Cardiac septum (tissue), 1 donor: ENCODE measurements at regions of chr1 and their contacts with region 1.

Region 1: GRCh38 chr1:159924981-159925712 is at the start of gene TAGLN2:
- DNase-seq: peak; percentile 96
- total RNA-seq, gene TAGLN2: 103 TPM

Region 2: GRCh38 chr1:158149577-158150269 is 1775.4 kb before region 1 on chr1:
- intact Hi-C with region 1: loop called (anchors 5 kb)
- DNase-seq: peak; percentile 97

Region 3: DNA sequence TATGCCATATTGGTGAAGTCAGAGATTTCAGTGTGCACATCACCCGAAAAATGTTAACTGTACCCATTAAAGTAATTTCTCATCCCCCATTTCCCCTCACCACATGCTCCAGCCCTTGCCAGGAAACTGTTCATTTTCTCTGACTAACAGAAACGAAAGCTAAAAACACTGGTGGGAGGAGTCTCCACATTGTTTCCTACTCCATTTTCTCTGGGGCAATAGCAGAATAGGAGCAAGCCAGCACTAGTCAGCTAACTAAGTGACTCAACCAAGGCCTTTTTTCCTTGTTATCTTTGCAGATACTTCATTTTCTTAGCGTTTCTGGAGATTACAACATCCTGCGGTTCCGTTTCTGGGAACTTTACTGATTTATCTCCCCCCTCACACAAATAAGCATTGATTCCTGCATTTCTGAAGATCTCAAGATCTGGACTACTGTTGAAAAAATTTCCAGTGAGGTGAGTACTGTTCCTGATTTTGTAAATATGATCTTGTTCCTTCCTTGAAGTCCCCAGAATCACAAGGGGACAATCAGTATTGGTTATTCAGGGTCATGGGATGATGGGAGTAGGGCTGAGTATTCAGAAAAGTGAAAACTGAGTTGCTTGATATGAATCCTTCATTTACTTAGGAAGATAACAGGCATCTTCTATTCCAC is 915.3 kb before region 1 on chr1 and contains the start of gene IFI16:
- intact Hi-C with region 1: loop called (anchors 5 kb)
- DNase-seq: no peak
- total RNA-seq, gene IFI16: 31.1 TPM

Region 4: GRCh38 chr1:159854693-159855192 is 70.4 kb before region 1 on chr1:
- intact Hi-C with region 1: loop called (anchors 1 kb)
- DNase-seq: peak; percentile 92

Region 5: DNA sequence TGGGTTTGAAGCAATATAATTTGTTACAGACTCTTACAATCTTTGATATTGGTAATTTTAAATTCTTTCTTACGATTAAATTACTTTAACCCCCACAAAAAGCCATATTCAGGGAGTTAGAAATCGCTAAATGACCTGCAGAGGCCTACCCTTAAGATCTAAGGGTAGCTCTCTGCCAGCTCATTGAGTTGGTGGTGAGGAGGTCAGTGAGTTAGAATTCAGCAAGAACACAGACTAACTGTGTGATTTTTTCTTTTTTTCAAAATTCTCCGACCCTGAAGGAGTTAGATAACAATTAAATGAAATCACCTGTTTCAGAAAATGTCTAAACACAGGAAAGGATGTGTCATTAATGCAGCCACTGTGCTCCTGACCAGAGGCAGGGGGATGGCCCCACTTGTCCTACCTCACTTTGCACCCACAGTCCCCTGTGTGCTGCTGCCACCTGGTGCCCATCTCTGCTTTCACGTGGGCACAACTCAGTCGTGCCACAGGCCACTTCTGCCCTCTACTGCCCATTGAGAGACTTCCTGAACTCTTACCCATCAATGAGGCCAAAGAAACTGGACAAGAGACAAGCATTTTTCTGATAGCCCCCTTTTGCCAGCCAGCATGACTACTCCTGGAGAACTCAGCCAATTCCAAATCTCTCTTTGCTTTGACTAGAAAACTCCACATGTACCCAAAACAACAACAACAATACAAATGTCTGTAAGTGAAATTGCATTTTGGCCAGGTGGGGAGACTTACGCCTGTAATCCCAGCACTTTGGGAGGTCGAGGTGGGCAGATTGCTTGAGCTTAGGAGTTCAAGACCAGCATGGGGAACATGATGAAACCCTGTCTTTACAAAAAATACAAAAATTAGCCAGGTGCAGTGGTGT is 33.6 kb before region 1 on chr1:
- intact Hi-C with region 1: loop called (anchors 1 kb)
- DNase-seq: peak; percentile 93

Region 6: GRCh38 chr1:160328184-160328583 is 403.0 kb after region 1 on chr1:
- intact Hi-C with region 1: no loop called
- DNase-seq: no peak